GM23248 (cell line): ENCODE measurements at regions of chr2 and their contacts with region 1.

Region 1: GRCh38 chr2:70301344-70302194 is at the start of gene FAM136A:
- DNase-seq: peak; percentile 91
- H3K4me3 ChIP-seq: peak within 1 kb of the TSS; percentile 97
- H3K27ac ChIP-seq: peak within 1 kb of the TSS; percentile 15; the same call in 1 of the 2 replicates
- H3K4me1 ChIP-seq: peaks cover 4% of the 10 kb centered on the region; the same call in 1 of the 2 replicates
- H3K27me3 ChIP-seq: no peaks in the 10 kb centered on the region
- total RNA-seq, gene FAM136A: 40.3 and 44.2 TPM in 2 replicates

Region 2: GRCh38 chr2:70498054-70498453 is 196.5 kb after region 1 on chr2:
- in situ Hi-C with region 1: no loop called
- DNase-seq: no peak
- H3K4me3 ChIP-seq: no peak overlapping the region
- H3K27ac ChIP-seq: no peak overlapping the region
- H3K4me1 ChIP-seq: peaks cover 5% of the 10 kb centered on the region; the same call in 1 of the 2 replicates
- H3K27me3 ChIP-seq: no peaks in the 10 kb centered on the region

Region 3: DNA sequence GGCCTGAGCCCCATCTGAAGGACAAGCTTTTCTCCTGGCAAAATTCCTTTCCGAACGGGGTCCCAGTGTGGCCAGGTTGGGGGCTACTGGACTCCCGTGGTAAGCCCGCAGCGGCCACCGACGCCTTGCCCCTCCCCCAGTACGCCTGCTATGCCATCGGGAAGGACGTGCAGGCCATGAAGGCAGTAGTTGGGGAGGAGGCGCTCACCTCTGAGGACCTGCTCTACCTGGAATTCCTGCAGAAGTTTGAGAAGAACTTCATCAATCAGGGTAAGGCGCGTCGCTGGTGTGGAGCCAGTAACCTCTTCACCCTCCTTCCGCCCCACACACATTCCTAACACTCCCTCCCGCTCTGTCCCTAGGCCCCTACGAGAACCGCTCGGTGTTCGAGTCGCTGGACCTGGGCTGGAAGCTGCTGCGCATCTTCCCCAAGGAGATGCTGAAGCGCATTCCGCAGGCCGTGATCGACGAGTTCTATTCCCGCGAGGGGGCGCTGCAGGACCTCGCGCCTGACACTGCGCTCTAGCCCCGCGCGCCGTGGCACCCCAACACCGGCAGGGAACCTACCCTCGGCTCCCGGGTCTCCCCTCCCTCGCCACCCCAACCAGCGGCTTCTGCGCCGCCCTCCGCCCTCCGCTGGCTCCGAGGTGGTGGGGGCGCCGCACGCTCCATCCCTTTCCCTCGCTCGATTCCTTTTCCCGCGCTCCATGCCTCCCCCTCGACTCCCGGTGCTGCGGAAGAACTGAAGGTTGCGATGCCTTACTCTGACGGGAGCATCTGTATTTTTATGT is 663.2 kb after region 1 on chr2:
- in situ Hi-C with region 1: loop called (anchors 25 kb)
- DNase-seq: peak; percentile 84
- H3K4me3 ChIP-seq: peak overlapping the region; percentile 80
- H3K27ac ChIP-seq: no peak overlapping the region
- H3K4me1 ChIP-seq: no peaks in the 10 kb centered on the region
- H3K27me3 ChIP-seq: peaks cover 21% of the 10 kb centered on the region; the same call in 1 of the 2 replicates